ENCODE measurements at regions of chr9 and their contacts with region 1.

Region 1: GRCh38 chr9:93682232-93682968 is 106.0 kb downstream of the PHF2 start:
- DNase-seq: peak; percentile 55
- H3K4me3 ChIP-seq: no peak overlapping the region
- H3K27ac ChIP-seq: no peak overlapping the region
- H3K4me1 ChIP-seq: peaks cover 14% of the 10 kb centered on the region
- H3K27me3 ChIP-seq: no peaks in the 10 kb centered on the region
- CTCF ChIP-seq: peak; percentile 74 to 82
- POLR2A ChIP-seq: no peak

Region 2: DNA sequence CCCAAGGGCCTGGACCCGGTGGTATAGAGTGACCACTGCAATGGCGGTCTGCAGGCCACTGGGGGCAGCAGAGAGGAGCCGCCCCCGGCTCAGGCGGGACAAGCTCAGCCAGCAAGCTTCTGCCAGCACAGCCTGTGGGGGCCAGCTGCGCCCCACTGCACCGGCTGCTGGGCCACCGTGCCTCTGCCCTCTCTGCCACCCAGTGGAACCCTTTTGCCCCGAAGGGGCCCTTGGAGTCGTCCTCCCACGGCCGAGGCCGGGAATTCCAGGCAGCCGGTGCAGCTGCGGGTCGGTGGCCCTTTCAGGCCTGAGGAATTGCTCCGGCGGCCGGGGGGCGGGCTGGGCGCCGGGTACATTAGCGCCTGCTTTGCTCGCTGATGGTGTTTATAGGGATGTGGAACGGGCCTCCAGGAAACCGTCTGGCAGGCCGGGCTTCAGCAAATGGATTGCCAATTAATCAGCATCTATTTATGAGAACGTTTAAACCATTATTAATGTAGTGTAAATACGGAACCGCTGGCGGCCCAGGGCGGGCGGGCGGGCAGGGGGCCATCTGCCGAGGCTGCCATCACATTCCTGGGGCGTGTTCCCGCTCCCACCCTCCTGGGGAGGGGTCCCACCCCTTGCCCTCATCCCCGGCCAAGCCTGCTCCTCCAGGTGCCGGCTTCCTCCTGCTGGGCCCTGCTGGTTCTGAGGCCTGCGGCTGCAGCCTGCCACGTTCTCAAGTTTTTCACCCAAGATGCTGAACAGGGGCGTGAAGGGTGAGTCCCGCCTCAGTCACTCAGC is 145.3 kb after region 1 on chr9:
- CTCF ChIA-PET with region 1: interaction called, 6 read pairs
- POLR2A ChIA-PET with region 1: no interaction called
- dilution Hi-C with region 1: no loop called
- intact Hi-C with region 1: loop called (anchors 1 kb)
- DNase-seq: peak; percentile 73
- H3K4me3 ChIP-seq: peak overlapping the region in 1 of 3 experiments; percentile 31
- H3K27ac ChIP-seq: no peak overlapping the region
- H3K4me1 ChIP-seq: no peaks in the 10 kb centered on the region
- H3K27me3 ChIP-seq: no peaks in the 10 kb centered on the region
- CTCF ChIP-seq: peak; percentile 90 to 95
- POLR2A ChIP-seq: no peak

Region 3: DNA sequence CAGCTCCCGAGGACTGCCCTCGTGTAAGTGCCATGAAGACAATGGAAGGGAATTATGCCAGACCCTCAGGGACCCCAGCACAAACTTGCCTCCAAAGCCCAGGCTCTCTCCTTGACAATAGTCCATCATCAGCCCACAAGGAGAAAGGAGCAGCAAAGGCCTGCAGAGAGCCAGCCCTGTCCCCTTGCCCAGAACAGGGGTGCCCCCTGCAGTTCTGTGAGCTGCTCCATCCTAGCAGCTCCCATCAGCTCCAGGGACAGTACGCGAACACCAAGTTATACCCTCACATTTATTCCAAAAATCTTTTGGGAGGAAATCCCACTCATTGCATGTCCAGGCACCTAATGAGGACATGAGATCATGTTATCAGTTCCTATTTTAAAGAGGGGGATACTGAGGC is 261.6 kb after region 1 on chr9:
- CTCF ChIA-PET with region 1: interaction called, 10 read pairs
- POLR2A ChIA-PET with region 1: no interaction called
- dilution Hi-C with region 1: no loop called
- intact Hi-C with region 1: no loop called
- DNase-seq: no peak
- H3K4me3 ChIP-seq: no peak overlapping the region
- H3K27ac ChIP-seq: no peak overlapping the region
- H3K4me1 ChIP-seq: no peaks in the 10 kb centered on the region
- H3K27me3 ChIP-seq: peaks cover 61 to 63% of the 10 kb centered on the region in 2 experiments
- CTCF ChIP-seq: no peak
- POLR2A ChIP-seq: no peak

Region 4: DNA sequence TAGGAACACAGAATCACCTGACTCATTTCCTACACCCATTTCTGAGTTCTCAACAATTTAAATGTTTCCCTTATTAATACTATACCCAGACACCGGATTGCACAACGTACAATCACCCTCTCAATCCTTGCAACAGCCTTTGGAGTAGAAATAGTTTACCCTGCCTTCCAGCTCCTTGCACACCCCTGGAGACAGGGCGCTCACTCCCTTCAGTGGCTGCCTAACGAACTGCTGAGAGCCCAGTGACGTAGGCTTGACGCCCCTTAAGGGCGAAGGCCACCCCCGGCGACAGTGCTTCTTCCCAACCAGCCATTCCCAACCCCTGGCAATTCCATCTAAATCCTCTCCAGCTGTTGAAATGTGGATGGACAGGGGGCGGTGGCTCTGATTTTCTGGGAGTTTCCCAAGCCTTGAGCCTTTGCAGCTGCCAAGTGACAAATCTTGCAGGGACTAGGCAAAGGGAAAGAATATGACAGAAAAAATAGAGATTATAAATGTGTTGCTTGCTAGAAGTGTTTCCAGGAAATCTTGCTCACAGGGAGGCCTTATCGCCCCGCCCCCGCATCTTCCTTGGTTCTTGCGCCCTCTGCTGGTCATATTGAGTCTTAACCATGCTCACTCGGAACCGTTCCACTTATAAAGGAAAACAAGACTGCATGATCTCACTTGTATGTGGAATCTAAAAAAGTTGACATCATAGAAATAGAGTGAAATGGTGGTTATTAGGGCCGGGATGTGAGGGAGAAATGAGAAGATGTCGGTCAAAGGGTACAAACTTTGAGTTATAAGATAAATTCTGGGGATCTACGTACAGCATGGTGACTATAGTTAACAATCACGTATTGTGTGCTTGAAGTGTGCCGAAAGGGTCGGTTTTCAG is 280.4 kb after region 1 on chr9:
- CTCF ChIA-PET with region 1: interaction called, 154 read pairs
- POLR2A ChIA-PET with region 1: no interaction called
- dilution Hi-C with region 1: no loop called
- intact Hi-C with region 1: loop called (anchors 1 kb)
- DNase-seq: peak; percentile 87
- H3K4me3 ChIP-seq: no peak overlapping the region
- H3K27ac ChIP-seq: no peak overlapping the region
- H3K4me1 ChIP-seq: no peaks in the 10 kb centered on the region
- H3K27me3 ChIP-seq: peaks cover 43 to 45% of the 10 kb centered on the region in 2 experiments
- CTCF ChIP-seq: peak; percentile 70 to 71
- POLR2A ChIP-seq: no peak

Region 5: DNA sequence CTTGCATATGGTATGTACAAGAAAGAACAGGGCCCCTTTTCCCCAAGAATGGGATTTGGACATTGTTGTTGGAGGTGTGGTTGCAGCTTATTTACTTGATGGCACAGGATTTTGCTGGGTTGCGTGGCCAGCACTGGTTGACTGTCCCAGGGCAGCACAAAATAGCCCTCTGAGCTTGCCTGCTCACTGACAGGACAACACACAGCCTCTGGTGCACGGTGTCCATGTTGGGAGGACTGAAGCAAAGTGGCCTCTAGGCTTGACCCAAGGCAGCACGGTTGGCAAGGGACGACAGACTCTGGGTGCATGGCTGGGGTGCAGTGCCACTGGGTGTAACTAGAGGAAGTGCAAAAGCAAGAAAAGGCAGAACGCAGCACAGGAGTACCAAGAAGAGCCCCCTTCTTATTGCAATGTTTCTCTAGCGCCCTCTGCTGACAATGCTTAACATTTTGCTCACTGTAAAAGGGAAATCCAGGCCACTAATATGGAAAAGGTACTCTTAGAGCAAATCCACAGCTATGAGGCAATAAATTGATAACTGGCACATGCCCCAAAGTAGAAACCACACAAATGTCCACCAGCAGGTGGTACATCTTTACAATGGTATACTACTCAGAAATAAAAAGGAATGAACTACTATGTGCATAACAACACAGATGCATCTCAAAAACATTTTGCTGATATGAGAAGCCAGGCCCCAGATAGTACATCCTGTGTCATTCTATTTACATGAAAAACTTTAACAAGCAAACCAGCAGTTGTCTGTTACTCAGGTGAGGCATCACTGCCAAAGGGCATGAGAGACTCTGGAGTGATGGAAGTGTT is 320.1 kb after region 1 on chr9:
- CTCF ChIA-PET with region 1: interaction called, 45 read pairs
- POLR2A ChIA-PET with region 1: no interaction called
- dilution Hi-C with region 1: no loop called
- intact Hi-C with region 1: loop called (anchors 1 kb)
- DNase-seq: peak; percentile 57
- H3K4me3 ChIP-seq: no peak overlapping the region
- H3K27ac ChIP-seq: no peak overlapping the region
- H3K4me1 ChIP-seq: no peaks in the 10 kb centered on the region
- H3K27me3 ChIP-seq: peaks cover 9 to 18% of the 10 kb centered on the region in 2 experiments
- CTCF ChIP-seq: peak; percentile 61 to 77
- POLR2A ChIP-seq: no peak

Region 6: GRCh38 chr9:94065535-94065961 is 383.1 kb after region 1 on chr9:
- CTCF ChIA-PET with region 1: interaction called, 3 read pairs
- POLR2A ChIA-PET with region 1: no interaction called
- dilution Hi-C with region 1: no loop called
- intact Hi-C with region 1: loop called (anchors 10 kb)
- DNase-seq: peak; percentile 89
- H3K4me3 ChIP-seq: no peak overlapping the region
- H3K27ac ChIP-seq: no peak overlapping the region
- H3K4me1 ChIP-seq: peaks cover 4% of the 10 kb centered on the region
- H3K27me3 ChIP-seq: no peaks in the 10 kb centered on the region
- CTCF ChIP-seq: peak; percentile 73 to 80
- POLR2A ChIP-seq: no peak

Region 7: GRCh38 chr9:94139672-94140417 is 457.4 kb after region 1 on chr9:
- CTCF ChIA-PET with region 1: no interaction called
- POLR2A ChIA-PET with region 1: no interaction called
- dilution Hi-C with region 1: no loop called
- intact Hi-C with region 1: no loop called
- DNase-seq: peak; percentile 96
- H3K4me3 ChIP-seq: no peak overlapping the region
- H3K27ac ChIP-seq: peak overlapping the region; percentile 87
- H3K4me1 ChIP-seq: peaks cover 24% of the 10 kb centered on the region
- H3K27me3 ChIP-seq: no peaks in the 10 kb centered on the region
- CTCF ChIP-seq: no peak
- POLR2A ChIP-seq: no peak

Region 8: DNA sequence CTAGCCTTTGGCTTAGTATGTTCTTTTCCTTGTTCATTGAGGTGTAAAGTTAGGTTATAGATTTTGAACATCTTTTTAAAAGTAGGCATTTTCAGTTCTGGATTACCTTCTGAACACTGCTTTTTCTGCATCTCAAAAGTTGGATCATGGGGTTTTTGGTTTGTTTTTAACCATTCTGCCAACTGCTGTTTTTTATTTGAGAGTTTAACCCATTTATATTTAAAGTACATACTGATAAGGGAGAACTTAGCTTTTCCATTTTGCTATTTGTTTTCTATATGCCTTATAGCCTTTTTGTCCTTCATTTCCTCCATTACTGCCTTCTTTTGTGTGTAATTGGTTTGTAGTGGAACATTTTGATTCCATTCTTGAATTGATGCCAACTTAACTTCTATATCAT is 546.2 kb after region 1 on chr9:
- CTCF ChIA-PET with region 1: no interaction called
- POLR2A ChIA-PET with region 1: no interaction called
- dilution Hi-C with region 1: no loop called
- intact Hi-C with region 1: no loop called
- DNase-seq: no peak
- H3K4me3 ChIP-seq: no peak overlapping the region
- H3K27ac ChIP-seq: no peak overlapping the region
- H3K4me1 ChIP-seq: no peaks in the 10 kb centered on the region
- H3K27me3 ChIP-seq: peaks cover 6 to 9% of the 10 kb centered on the region in 2 experiments
- CTCF ChIP-seq: no peak
- POLR2A ChIP-seq: no peak